ENCODE measurements at regions of chr1 and their contacts with region 1.

Region 1: DNA sequence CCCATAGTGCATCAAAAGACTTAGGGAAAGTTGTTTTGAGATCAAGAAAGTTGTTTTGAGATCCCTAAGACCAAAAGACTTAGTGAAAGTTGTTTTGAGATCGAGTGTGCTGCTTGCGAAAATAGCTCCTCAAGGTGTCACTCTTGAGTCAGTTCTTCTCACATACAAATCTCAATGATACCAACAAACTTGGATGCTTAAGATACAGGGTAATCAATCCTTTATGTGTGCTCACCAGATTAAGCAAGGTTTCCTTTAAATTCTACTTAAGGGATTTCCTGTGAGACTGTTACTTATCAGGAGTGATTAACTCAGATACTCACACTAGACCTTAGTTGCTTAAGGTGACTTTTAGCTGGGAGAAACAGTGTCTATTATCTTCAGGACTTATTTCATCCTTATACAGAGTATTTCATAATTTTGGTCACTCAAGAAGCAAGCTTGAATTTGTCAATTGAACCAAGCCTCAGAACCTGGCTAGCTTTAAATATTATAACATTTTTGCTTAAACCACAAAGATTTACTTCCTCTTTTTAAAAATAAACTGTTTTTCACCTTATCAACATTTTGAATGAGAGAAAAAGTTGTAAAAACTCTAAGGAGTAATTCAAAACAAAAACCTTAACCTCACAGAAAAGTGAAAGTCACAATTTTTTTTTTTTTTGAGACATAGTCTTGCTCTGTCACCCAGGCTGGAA is 8.0 kb upstream of the RLF start:
- DNase-seq: peak in 8 of 14 experiments; percentile 5 to 83 (median 36)
- ATAC-seq: peak; percentile 76
- H3K4me3 ChIP-seq: no peak overlapping the region
- H3K4me3 Mint-ChIP-seq: peak overlapping the region; percentile 2
- H3K27ac ChIP-seq: no peak overlapping the region
- H3K27ac Mint-ChIP-seq: peak overlapping the region; percentile 12
- H3K4me1 ChIP-seq: no peaks in the 10 kb centered on the region
- H3K4me1 Mint-ChIP-seq: peaks cover 7% of the 10 kb centered on the region
- H3K27me3 ChIP-seq: no peaks in the 10 kb centered on the region
- H3K27me3 Mint-ChIP-seq: no peaks in the 10 kb centered on the region
- CTCF ChIP-seq: peak; percentile 78

Region 2: GRCh38 chr1:40092706-40093639 is 60.2 kb before region 1 on chr1:
- CTCF ChIA-PET with region 1: no interaction called
- POLR2A ChIA-PET with region 1: no interaction called
- intact Hi-C with region 1: loop called in 1 of 2 experiments (anchors 2 kb)
- DNase-seq: no peak
- ATAC-seq: no peak
- H3K4me3 ChIP-seq: no peak overlapping the region
- H3K4me3 Mint-ChIP-seq: no peak overlapping the region
- H3K27ac ChIP-seq: no peak overlapping the region
- H3K27ac Mint-ChIP-seq: no peak overlapping the region
- H3K4me1 ChIP-seq: peaks cover 17% of the 10 kb centered on the region
- H3K4me1 Mint-ChIP-seq: peaks cover 39% of the 10 kb centered on the region
- H3K27me3 ChIP-seq: no peaks in the 10 kb centered on the region
- H3K27me3 Mint-ChIP-seq: peaks cover 3% of the 10 kb centered on the region
- CTCF ChIP-seq: no peak

Region 3: DNA sequence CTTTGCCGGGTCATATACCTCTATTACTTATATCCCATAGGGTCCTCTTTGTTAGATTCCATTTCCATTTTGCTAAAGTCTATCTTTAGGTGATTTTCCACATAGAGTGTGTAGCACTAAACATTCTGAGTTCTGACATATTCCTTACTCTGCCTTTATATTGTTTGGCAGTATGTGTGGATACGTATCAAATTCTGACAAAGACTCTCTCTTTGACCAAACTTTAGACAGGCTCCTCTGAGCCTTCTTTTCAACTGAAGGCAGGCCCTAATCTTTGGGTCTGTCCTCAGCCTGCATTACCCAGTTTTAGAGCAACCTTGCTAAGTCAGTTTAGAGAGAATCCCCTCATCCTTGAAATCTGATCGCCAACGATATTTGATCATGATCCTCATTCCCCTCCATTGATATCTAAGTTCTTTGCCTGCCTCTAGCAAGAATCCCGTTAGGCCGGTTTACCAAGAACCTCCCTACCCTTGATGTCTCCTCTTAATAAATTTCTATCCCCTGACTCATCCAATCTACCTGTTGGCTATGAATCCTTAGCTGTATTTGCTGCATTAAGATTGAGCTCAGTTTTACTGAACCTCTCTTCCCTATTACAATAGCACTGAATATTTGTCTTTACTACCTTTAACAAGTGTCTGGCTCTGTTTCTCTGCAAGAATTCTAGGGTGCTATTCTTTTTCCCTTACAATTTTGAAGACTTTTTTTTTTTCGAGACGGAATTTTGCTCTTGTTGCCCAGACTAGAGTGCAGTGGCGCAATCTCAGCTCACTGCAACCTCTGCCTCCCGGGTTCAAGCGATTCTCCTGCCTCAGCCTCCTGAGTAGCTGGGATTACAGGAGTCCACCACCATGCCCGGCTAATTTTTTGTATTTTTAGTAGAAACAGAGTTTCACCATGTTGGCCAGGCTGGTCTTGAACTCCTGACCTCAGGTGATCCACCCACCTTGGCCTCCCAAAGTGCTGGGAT is 45.6 kb before region 1 on chr1:
- CTCF ChIA-PET with region 1: no interaction called
- POLR2A ChIA-PET with region 1: no interaction called
- intact Hi-C with region 1: no loop called
- DNase-seq: no peak
- ATAC-seq: no peak
- H3K4me3 ChIP-seq: no peak overlapping the region
- H3K4me3 Mint-ChIP-seq: no peak overlapping the region
- H3K27ac ChIP-seq: no peak overlapping the region
- H3K27ac Mint-ChIP-seq: no peak overlapping the region
- H3K4me1 ChIP-seq: no peaks in the 10 kb centered on the region
- H3K4me1 Mint-ChIP-seq: no peaks in the 10 kb centered on the region
- H3K27me3 ChIP-seq: peaks cover 0 to 10% of the 10 kb centered on the region in 2 experiments
- H3K27me3 Mint-ChIP-seq: peaks cover 28% of the 10 kb centered on the region
- CTCF ChIP-seq: no peak

Region 4: GRCh38 chr1:40183055-40183710 is 30.0 kb after region 1 on chr1:
- CTCF ChIA-PET with region 1: interaction called, 18 read pairs
- POLR2A ChIA-PET with region 1: no interaction called
- intact Hi-C with region 1: loop called in 1 of 2 experiments (anchors 2 kb)
- DNase-seq: peak in 4 of 14 experiments; percentile 27 to 56 (median 41)
- ATAC-seq: peak; percentile 54
- H3K4me3 ChIP-seq: no peak overlapping the region
- H3K4me3 Mint-ChIP-seq: no peak overlapping the region
- H3K27ac ChIP-seq: no peak overlapping the region
- H3K27ac Mint-ChIP-seq: peak overlapping the region; percentile 3
- H3K4me1 ChIP-seq: peaks cover 25% of the 10 kb centered on the region
- H3K4me1 Mint-ChIP-seq: peaks cover 82% of the 10 kb centered on the region
- H3K27me3 ChIP-seq: no peaks in the 10 kb centered on the region
- H3K27me3 Mint-ChIP-seq: no peaks in the 10 kb centered on the region
- CTCF ChIP-seq: peak; percentile 44

Region 5: GRCh38 chr1:40315239-40315794 is 162.1 kb after region 1 on chr1:
- CTCF ChIA-PET with region 1: interaction called, 17 read pairs
- POLR2A ChIA-PET with region 1: interaction called, 5 read pairs
- intact Hi-C with region 1: loop called in 1 of 2 experiments (anchors 2 kb)
- DNase-seq: peak; percentile 78 to 94 (median 84)
- ATAC-seq: peak; percentile 84
- H3K4me3 ChIP-seq: peak overlapping the region; percentile 77
- H3K4me3 Mint-ChIP-seq: peak overlapping the region; percentile 90
- H3K27ac ChIP-seq: no peak overlapping the region
- H3K27ac Mint-ChIP-seq: peak overlapping the region; percentile 64
- H3K4me1 ChIP-seq: peaks cover 51% of the 10 kb centered on the region
- H3K4me1 Mint-ChIP-seq: peaks cover 37% of the 10 kb centered on the region
- H3K27me3 ChIP-seq: peaks cover 0 to 11% of the 10 kb centered on the region in 2 experiments
- H3K27me3 Mint-ChIP-seq: peaks cover 24% of the 10 kb centered on the region
- CTCF ChIP-seq: peak; percentile 79

Region 6: DNA sequence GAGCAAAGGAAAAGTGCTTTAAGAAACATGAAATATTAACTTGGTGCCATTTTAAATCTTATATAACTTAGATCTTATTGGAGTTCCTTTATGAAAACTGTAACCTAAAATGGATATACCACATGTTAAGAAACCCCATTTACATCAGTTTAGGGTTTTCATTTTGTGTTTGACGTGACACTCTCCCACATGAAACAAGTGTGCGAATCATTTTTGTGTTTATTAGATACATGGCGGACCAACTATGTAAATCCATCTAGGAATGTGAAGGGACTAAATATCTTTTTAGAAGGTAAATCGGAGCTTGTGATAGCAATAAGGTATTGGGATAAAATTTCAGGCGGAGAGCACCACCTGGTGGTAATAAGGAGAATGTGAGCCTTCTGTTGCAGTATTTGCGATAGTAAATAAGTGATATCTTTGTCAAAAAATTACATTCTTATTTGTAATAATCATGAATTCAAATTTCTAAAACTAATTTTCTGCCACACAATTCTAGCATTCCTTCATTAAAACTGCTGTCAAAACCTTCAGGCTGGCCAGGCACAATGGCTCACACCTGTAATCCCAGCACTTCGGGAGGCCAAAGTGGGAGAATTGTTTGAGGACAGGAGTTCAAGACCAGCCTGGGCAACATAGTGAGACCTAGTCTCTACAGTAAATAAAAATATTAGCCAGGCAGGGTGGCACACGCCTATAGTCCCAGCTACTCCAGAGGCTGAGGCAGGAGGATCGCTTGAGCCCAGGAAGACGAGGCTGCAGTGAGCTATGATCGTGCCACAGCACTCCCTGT is 251.6 kb after region 1 on chr1:
- CTCF ChIA-PET with region 1: interaction called, 18 read pairs
- POLR2A ChIA-PET with region 1: interaction called, 3 read pairs
- intact Hi-C with region 1: loop called (anchors 1 to 2 kb)
- DNase-seq: peak in 7 of 14 experiments; percentile 25 to 86 (median 65)
- ATAC-seq: peak; percentile 81
- H3K4me3 ChIP-seq: no peak overlapping the region
- H3K4me3 Mint-ChIP-seq: peak overlapping the region; percentile 50
- H3K27ac ChIP-seq: peak overlapping the region; percentile 33 to 48
- H3K27ac Mint-ChIP-seq: peak overlapping the region; percentile 86
- H3K4me1 ChIP-seq: peaks cover 47% of the 10 kb centered on the region
- H3K4me1 Mint-ChIP-seq: peaks cover 63% of the 10 kb centered on the region
- H3K27me3 ChIP-seq: no peaks in the 10 kb centered on the region
- H3K27me3 Mint-ChIP-seq: no peaks in the 10 kb centered on the region
- CTCF ChIP-seq: peak; percentile 94

Region 7: DNA sequence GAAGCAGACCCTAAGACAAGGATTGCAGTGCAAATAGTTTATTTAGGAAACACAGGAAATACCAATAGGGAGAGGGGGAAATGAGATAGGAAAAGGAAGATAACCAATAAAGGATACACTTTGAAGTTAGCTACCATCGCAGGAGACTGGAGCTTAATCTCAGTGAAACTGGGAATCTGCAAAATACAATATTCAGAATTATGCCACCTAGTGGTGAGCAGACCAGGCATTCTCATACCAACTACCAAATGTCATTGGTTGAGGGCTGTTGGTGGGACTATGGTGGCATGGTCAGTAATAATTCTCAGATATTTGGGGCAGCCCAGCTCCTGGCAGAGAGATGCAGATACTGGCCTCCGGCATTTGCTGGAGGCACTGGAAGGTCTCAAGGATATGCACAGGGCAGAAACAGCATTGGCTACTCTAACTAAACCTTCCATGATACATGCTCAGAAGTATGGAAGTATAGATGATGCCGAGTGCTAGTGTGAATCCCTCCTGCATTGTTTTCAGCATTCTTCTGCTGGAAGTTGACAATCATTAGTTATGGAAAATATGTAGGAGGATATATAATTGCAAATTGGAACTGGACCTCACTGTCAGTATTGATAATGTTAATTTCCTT is 285.3 kb after region 1 on chr1:
- CTCF ChIA-PET with region 1: interaction called, 14 read pairs
- POLR2A ChIA-PET with region 1: no interaction called
- intact Hi-C with region 1: loop called in 1 of 2 experiments (anchors 2 kb)
- DNase-seq: peak in 4 of 14 experiments; percentile 37 to 63 (median 54)
- ATAC-seq: peak; percentile 44
- H3K4me3 ChIP-seq: no peak overlapping the region
- H3K4me3 Mint-ChIP-seq: no peak overlapping the region
- H3K27ac ChIP-seq: no peak overlapping the region
- H3K27ac Mint-ChIP-seq: no peak overlapping the region
- H3K4me1 ChIP-seq: no peaks in the 10 kb centered on the region
- H3K4me1 Mint-ChIP-seq: no peaks in the 10 kb centered on the region
- H3K27me3 ChIP-seq: no peaks in the 10 kb centered on the region
- H3K27me3 Mint-ChIP-seq: no peaks in the 10 kb centered on the region
- CTCF ChIP-seq: peak; percentile 81

Region 8: DNA sequence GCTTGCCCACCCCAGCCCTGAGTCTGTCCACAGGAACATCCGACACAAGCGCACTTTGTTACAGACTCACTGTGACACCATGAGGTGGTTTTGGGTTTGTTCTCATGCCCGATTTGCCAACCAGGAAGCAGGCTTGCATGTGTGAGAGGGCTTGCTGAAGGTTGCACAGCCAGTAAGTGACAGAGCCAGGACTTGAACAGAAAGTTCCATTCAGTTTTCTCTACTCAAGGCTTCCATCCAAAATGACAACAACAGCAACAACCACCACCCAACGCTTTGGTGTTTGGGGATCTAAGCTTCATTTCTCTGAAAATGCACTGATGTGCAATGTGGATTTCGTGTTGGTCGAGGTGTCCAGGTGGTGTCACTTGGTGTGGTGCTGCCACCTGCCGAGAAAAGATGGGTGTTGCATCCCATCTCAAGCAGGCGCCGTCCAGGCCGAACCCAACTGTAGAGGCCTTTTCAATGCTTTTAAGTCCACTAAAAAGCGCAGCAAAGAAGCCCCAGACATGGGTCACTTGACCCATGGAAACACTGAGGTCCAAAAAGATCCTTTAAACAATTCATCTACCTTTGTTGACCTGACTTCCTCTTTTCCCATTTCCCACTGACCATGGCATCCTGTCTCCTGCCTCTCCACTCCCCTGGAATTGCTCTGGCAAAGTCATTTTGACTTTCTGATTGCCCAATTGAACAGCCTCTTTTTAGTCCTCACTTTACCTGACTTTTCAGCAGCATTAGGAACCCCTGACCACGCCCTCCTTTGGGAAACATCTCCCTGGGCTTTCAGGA is 696.8 kb after region 1 on chr1:
- CTCF ChIA-PET with region 1: no interaction called
- POLR2A ChIA-PET with region 1: no interaction called
- intact Hi-C with region 1: loop called in 1 of 2 experiments (anchors 5 kb)
- DNase-seq: peak; percentile 59 to 87 (median 72)
- ATAC-seq: peak; percentile 92
- H3K4me3 ChIP-seq: no peak overlapping the region
- H3K4me3 Mint-ChIP-seq: peak overlapping the region; percentile 30
- H3K27ac ChIP-seq: no peak overlapping the region
- H3K27ac Mint-ChIP-seq: no peak overlapping the region
- H3K4me1 ChIP-seq: peaks cover 7% of the 10 kb centered on the region
- H3K4me1 Mint-ChIP-seq: peaks cover 15% of the 10 kb centered on the region
- H3K27me3 ChIP-seq: no peaks in the 10 kb centered on the region
- H3K27me3 Mint-ChIP-seq: no peaks in the 10 kb centered on the region
- CTCF ChIP-seq: peak; percentile 90